HCT116 (cell line): ENCODE measurements at regions of chr17 and their contacts with region 1.

Region 1: DNA sequence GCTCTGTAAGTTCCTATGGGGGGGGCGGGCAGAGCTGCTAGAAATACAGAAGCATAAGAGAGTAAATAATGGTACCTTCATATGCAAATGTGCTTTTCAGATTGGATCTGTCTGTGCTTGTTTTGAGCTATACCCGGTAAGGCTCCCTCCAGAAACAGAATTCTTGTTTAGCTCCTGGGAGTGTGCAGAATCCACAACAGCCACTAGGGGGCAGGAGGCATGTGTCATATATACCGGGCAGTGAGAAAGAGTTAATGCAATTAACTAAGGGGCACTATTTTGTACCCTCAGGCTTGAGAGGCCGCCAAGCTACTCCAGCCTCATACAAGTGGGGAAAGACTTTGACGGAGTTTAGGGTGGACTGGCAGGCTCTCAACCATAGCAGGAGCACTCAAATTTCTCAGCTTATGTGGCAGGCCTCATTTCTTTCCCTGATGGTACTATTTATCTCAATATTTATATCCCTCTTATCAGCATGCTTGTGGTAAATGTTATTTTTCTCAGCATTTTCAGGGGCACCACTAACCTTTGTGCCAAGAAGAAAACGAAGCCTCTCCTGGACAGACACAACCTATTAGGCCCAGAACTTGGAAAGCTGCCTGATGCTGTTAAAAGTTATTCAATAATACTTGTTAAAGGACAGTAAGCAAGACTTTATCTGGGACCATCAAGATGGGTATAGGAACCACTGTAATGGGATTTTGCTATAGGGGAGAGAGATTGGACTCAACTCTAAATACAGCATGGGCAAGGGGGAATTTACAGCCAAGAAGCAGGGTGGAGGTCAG is 10.7 kb upstream of the CENPV start:
- DNase-seq: peak; percentile 72
- ATAC-seq: peak; percentile 97
- H3K4me3 ChIP-seq: no peak overlapping the region
- H3K27ac ChIP-seq: no peak overlapping the region
- H3K4me1 ChIP-seq: peaks cover 4 to 8% of the 10 kb centered on the region in 2 experiments; a peak in 2 of 4 replicates
- H3K27me3 ChIP-seq: no peaks in the 10 kb centered on the region
- CTCF ChIP-seq: peak; percentile 92 to 97 (median 96)
- POLR2A ChIP-seq: no peak
- RAD21 ChIP-seq: peak; percentile 85

Region 2: DNA sequence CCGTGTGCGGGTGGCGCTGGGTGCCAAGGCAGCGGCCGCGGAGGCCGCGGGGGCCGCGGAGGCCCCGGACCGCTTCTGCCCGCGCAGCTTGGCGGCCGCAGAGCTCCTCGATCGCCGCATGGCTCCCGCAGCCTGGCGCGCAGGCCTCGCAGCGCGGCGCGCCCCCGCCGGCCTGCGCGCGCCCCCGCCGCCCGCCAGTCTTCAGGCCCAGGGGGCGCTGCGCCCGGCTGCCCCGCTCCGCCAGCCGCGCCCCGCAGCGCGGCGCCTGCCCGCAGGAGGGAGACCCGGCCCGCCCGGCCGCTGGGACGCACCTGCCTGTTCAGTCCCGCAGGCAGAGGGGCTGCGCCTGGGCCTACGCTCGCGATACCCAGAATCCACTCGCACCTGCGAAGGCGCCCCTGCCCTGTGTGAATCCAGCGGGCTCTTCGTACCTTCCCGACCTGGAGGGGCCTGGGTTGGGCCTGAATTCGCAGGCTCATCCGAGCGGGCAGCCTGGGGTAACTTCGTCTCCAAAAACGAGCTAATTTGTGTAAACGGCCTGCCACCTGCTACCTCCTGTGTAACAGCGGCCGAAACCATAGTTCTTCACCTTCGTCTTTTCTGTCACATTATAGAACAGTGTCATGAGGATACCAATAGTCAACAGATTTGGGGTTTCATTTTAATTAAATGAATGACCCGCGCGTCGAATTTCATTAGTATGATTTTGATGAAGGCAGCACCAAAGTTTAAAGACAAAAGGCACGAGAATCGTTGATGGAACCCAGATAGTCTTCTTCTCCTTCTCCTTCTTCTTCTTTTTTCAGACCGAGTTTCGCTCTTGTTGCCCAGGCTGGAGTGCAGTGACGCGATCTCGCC is 10.4 kb before region 1 on chr17 and contains the start of gene CENPV:
- CTCF ChIA-PET with region 1: interaction called, 31 read pairs
- POLR2A ChIA-PET with region 1: interaction called, 3 read pairs
- RAD21 ChIA-PET with region 1: no interaction called
- intact Hi-C with region 1: no loop called
- DNase-seq: peak; percentile 41
- ATAC-seq: peak; percentile 87
- H3K4me3 ChIP-seq: peak within 1 kb of the TSS; percentile 83 to 92
- H3K27ac ChIP-seq: peak within 1 kb of the TSS; percentile 89
- H3K4me1 ChIP-seq: peaks cover 11 to 18% of the 10 kb centered on the region in 2 experiments
- H3K27me3 ChIP-seq: no peaks in the 10 kb centered on the region
- CTCF ChIP-seq: no peak
- POLR2A ChIP-seq: peak; percentile 70
- RAD21 ChIP-seq: no peak
- total RNA-seq, gene CENPV: 84.7 TPM